Activated CD4-positive, alpha-beta T cell treated with anti-CD3 and anti-CD28 coated beads, Interleukin-2, amount 10 ng/mL, durations not matched to agents 24 days and 14 days (primary cell): ENCODE measurements at regions of chr11 and their contacts with region 1.

Region 1: DNA sequence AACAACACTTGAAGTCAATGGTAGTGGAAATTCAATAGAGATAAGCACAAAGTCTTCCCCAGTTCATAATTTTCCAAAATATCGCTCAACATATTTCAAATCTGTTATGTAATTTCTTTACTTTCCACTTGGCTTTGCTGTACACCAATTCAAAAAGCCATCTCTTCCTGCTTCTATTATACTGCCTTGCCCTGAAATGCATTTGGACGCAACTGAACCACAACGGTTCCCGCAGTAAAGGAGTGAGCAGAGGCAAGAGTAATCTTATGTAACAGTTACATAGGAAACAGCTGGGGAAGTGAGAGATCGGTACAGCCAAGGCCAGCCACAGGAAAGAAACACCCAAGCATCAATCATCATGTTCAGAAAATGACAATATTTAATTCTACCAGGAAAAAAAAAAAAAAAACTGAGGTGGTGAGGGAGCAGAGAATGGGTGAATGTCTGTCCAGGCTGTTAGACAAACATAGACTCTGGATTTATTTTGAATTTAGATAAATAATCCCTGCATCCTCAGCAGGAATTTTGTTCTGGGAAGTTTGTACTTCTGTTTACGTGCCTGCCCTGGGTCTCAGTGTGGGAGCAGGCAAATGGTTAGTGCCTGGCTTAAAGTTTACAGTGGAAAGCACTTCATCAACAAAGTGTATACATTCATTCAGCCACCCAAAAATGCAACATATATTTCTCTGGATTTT is 392.2 kb downstream of the ETS1 start:
- DNase-seq: peak; percentile 84
- H3K4me3 Mint-ChIP-seq: peak overlapping the region; percentile 1
- H3K27ac Mint-ChIP-seq: peak overlapping the region; percentile 18
- H3K4me1 Mint-ChIP-seq: peaks cover 29% of the 10 kb centered on the region
- H3K27me3 Mint-ChIP-seq: no peaks in the 10 kb centered on the region

Region 2: DNA sequence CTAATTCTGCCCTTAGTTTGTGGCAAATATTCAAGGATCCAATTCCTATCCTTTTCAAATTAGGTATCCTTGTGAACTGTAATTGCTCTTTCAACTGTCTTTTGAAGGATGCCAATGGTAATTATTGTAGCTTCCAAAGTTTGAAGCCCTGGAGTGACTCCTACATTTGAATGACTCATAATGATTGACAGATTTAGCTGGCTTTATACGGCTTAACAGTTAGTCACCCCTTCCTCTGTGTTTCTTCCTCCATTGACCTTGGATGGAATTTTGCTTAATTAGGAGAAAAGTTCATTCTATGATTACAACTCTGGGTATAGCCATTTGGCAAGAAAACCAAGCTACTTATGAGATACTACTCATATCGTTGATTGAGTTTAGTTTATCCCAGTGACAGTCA is 555.3 kb before region 1 on chr11:
- intact Hi-C with region 1: no loop called
- DNase-seq: no peak
- H3K4me3 Mint-ChIP-seq: no peak overlapping the region
- H3K27ac Mint-ChIP-seq: no peak overlapping the region
- H3K4me1 Mint-ChIP-seq: no peaks in the 10 kb centered on the region
- H3K27me3 Mint-ChIP-seq: no peaks in the 10 kb centered on the region

Region 3: GRCh38 chr11:128226106-128226716 is 31.0 kb after region 1 on chr11:
- intact Hi-C with region 1: loop called (anchors 2 kb)
- DNase-seq: peak; percentile 58
- H3K4me3 Mint-ChIP-seq: peak overlapping the region; percentile 39
- H3K27ac Mint-ChIP-seq: peak overlapping the region; percentile 91
- H3K4me1 Mint-ChIP-seq: peaks cover 33% of the 10 kb centered on the region
- H3K27me3 Mint-ChIP-seq: no peaks in the 10 kb centered on the region